ENCODE measurements at regions of chr5 and their contacts with region 1.

Region 1: DNA sequence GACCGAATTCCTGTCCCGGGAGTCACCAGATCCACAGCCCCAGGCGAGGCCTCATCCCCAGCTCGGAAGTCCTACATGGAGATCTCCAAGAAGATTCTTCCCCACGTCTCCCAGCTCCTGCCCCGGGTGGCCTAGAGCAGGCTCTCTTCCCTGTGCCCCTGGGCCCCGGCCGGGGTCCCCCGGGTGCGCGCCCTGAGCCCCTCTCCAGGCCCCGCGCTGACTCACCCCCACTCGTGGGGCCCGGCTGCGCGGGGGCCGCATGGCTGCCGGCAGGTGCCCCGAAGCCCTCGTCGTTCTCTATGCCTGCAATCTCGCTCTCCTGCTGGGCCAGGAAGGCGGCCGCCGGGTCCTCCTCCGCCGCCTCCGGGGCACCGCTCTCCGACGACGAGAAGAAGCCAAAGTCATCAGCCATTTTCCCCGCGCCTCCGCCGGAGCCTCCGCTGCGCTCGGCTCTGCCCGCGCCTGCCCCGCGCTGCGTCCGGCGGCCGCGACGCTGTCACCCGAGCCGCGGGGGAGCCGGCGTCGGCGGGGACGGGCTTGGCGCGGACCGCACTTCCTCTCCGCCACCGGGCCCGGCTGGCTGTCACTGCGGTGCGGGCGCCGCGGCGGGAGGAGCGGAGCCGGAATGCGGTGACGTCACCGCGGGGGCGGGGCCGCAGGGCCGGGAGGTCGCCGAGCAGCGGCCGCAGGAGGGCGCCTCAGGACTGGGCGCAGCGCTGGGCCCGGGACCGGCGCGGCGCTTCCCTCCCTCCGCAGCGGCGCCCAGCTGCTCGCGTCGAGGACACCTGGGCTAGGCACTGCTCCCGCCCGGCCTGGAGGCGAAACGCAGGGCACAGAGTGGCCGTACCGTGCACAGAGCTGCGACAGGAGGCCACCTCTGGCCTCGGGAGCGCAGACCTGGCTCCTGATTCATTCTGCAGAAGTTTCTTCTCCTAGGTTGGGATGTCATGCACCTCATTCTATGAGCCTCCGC is at the start of gene CLTB:
- DNase-seq: peak; percentile 95
- ATAC-seq: peak; percentile 97
- H3K4me3 ChIP-seq: peak within 1 kb of the TSS; percentile 51 to 86 (median 70)
- H3K4me3 Mint-ChIP-seq: peak within 1 kb of the TSS; percentile 83
- H3K27ac ChIP-seq: peak within 1 kb of the TSS in 1 of 2 donors; percentile 58
- H3K27ac Mint-ChIP-seq: peak within 1 kb of the TSS; percentile 77
- H3K4me1 ChIP-seq: peaks cover 14 to 19% of the 10 kb centered on the region in 2 donors
- H3K4me1 Mint-ChIP-seq: peaks cover 21% of the 10 kb centered on the region
- H3K27me3 ChIP-seq: no peaks in the 10 kb centered on the region
- H3K27me3 Mint-ChIP-seq: peaks cover 2% of the 10 kb centered on the region
- CTCF ChIP-seq: peak; percentile 74
- total RNA-seq, gene CLTB: 29.6 and 29.9 TPM in 2 replicates

Region 2: GRCh38 chr5:175765858-175766257 is 650.4 kb before region 1 on chr5:
- CTCF ChIA-PET with region 1: no interaction called
- POLR2A ChIA-PET with region 1: no interaction called
- intact Hi-C with region 1: no loop called
- DNase-seq: no peak
- ATAC-seq: no peak
- H3K4me3 ChIP-seq: no peak overlapping the region
- H3K4me3 Mint-ChIP-seq: no peak overlapping the region
- H3K27ac ChIP-seq: no peak overlapping the region
- H3K27ac Mint-ChIP-seq: no peak overlapping the region
- H3K4me1 ChIP-seq: no peaks in the 10 kb centered on the region
- H3K4me1 Mint-ChIP-seq: no peaks in the 10 kb centered on the region
- H3K27me3 ChIP-seq: peaks cover 0 to 4% (median 2%) of the 10 kb centered on the region in 4 experiments
- H3K27me3 Mint-ChIP-seq: peaks cover 43% of the 10 kb centered on the region
- CTCF ChIP-seq: no peak

Region 3: DNA sequence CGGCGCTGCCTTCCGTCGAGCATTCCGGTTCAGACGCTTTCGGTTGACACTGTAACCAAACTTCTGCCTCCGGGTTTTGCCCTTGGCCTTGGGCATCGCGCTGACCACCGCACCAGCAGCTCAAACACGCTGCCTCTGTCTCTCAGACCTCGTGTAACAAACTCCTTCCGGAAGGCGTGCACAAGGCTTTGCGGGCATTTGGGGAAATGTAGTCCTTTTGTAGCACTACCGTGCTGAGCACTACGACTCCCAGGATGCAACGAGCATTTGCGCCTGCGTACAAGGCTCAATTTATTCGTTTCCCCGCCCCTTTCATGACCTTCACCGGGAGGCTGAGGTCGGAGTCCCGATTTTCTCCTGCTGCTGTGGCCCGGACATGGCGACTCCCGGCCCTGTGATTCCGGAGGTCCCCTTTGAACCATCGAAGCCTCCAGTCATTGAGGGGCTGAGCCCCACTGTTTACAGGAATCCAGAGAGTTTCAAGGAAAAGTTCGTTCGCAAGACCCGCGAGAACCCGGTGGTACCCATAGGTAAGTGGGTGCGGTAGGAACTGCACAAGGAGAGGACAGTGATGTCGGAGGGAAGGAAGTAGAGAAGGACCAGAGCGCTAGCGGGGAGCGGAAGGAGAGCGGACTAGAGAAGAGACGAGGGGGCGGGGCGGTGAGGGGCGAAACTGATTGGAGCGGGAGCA is 27.6 kb before region 1 on chr5 and contains the starts of genes HIGD2A and NOP16:
- CTCF ChIA-PET with region 1: no interaction called
- POLR2A ChIA-PET with region 1: interaction called, 7 read pairs
- intact Hi-C with region 1: loop called (anchors 1 kb)
- DNase-seq: peak; percentile 99
- ATAC-seq: peak; percentile 86
- H3K4me3 ChIP-seq: peak within 1 kb of the TSS; percentile 69 to 98 (median 93)
- H3K4me3 Mint-ChIP-seq: peak within 1 kb of the TSS; percentile 100
- H3K27ac ChIP-seq: peak within 1 kb of the TSS; percentile 90 to 93
- H3K27ac Mint-ChIP-seq: peak within 1 kb of the TSS; percentile 100
- H3K4me1 ChIP-seq: peaks cover 19 to 29% of the 10 kb centered on the region in 2 donors
- H3K4me1 Mint-ChIP-seq: peaks cover 26% of the 10 kb centered on the region
- H3K27me3 ChIP-seq: no peaks in the 10 kb centered on the region
- H3K27me3 Mint-ChIP-seq: no peaks in the 10 kb centered on the region
- CTCF ChIP-seq: no peak
- total RNA-seq, gene HIGD2A: 70.1 and 80.1 TPM in 2 replicates
- total RNA-seq, gene NOP16: 25.0 and 25.1 TPM in 2 replicates

Region 4: GRCh38 chr5:176537608-176538504 is 121.6 kb after region 1 on chr5:
- CTCF ChIA-PET with region 1: interaction called, 33 read pairs
- POLR2A ChIA-PET with region 1: interaction called, 6 read pairs
- intact Hi-C with region 1: loop called (anchors 1 kb)
- DNase-seq: peak; percentile 99
- ATAC-seq: peak; percentile 70
- H3K4me3 ChIP-seq: peak overlapping the region; percentile 84 to 100 (median 94)
- H3K4me3 Mint-ChIP-seq: peak overlapping the region; percentile 99
- H3K27ac ChIP-seq: peak overlapping the region; percentile 93 to 99
- H3K27ac Mint-ChIP-seq: peak overlapping the region; percentile 100
- H3K4me1 ChIP-seq: peaks cover 50 to 59% of the 10 kb centered on the region in 2 donors
- H3K4me1 Mint-ChIP-seq: peaks cover 70% of the 10 kb centered on the region
- H3K27me3 ChIP-seq: no peaks in the 10 kb centered on the region
- H3K27me3 Mint-ChIP-seq: no peaks in the 10 kb centered on the region
- CTCF ChIP-seq: no peak

Region 5: DNA sequence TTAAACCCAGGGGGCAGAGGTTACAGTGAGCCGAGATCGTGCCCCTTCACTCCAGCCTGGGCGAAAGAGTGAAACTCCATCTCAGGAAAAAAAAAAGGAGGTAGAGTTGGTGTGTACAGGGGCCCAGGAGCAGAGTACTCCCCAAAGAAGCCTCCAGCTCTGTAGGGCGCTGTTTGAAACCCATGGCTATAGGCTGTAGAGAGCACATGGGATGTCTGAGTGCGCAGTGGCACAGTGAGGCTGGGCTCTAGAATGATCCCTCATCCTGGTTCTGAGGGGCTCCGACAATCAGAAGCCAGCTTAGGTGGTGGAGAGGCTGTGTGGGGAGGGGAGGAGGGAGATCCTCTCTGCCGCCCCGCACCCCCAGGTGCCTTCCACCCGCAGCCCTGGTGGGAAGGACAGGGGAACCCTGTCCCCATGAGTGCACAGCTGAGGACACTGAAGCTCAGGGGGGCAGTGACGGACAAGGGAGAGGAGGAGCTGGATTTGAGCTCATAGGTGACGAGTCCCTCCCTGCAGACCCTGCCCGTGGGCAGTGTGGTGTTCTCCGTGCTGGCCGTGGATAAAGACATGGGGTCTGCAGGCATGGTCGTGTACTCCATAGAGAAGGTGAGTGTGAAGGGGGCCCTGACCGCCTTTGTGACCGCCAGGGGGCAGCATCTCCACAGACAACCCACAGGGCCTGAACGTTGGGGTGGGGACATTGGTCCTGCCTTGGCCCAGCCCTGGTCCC is 157.5 kb after region 1 on chr5:
- CTCF ChIA-PET with region 1: interaction called, 24 read pairs
- POLR2A ChIA-PET with region 1: no interaction called
- intact Hi-C with region 1: loop called (anchors 1 kb)
- DNase-seq: peak; percentile 82
- ATAC-seq: peak; percentile 79
- H3K4me3 ChIP-seq: no peak overlapping the region
- H3K4me3 Mint-ChIP-seq: no peak overlapping the region
- H3K27ac ChIP-seq: no peak overlapping the region
- H3K27ac Mint-ChIP-seq: no peak overlapping the region
- H3K4me1 ChIP-seq: peaks cover 0 to 11% of the 10 kb centered on the region in 2 donors
- H3K4me1 Mint-ChIP-seq: peaks cover 5% of the 10 kb centered on the region
- H3K27me3 ChIP-seq: peaks cover 0 to 7% (median 2%) of the 10 kb centered on the region in 4 experiments
- H3K27me3 Mint-ChIP-seq: peaks cover 12% of the 10 kb centered on the region
- CTCF ChIP-seq: peak; percentile 92

Region 6: GRCh38 chr5:176609724-176610434 is 193.6 kb after region 1 on chr5 and contains the start of gene GPRIN1:
- CTCF ChIA-PET with region 1: interaction called, 3 read pairs
- POLR2A ChIA-PET with region 1: no interaction called
- intact Hi-C with region 1: loop called (anchors 1 kb)
- DNase-seq: peak; percentile 82
- ATAC-seq: peak; percentile 78
- H3K4me3 ChIP-seq: peak within 1 kb of the TSS; percentile 21 to 78 (median 65)
- H3K4me3 Mint-ChIP-seq: peak within 1 kb of the TSS; percentile 98
- H3K27ac ChIP-seq: no peak within 1 kb of the TSS
- H3K27ac Mint-ChIP-seq: peak within 1 kb of the TSS; percentile 91
- H3K4me1 ChIP-seq: peaks cover 4 to 9% of the 10 kb centered on the region in 2 donors
- H3K4me1 Mint-ChIP-seq: peaks cover 12% of the 10 kb centered on the region
- H3K27me3 ChIP-seq: peaks cover 0 to 22% (median 8%) of the 10 kb centered on the region in 4 experiments
- H3K27me3 Mint-ChIP-seq: peaks cover 24% of the 10 kb centered on the region
- CTCF ChIP-seq: peak; percentile 17
- total RNA-seq, gene GPRIN1: 2.1 and 2.7 TPM in 2 replicates

Region 7: DNA sequence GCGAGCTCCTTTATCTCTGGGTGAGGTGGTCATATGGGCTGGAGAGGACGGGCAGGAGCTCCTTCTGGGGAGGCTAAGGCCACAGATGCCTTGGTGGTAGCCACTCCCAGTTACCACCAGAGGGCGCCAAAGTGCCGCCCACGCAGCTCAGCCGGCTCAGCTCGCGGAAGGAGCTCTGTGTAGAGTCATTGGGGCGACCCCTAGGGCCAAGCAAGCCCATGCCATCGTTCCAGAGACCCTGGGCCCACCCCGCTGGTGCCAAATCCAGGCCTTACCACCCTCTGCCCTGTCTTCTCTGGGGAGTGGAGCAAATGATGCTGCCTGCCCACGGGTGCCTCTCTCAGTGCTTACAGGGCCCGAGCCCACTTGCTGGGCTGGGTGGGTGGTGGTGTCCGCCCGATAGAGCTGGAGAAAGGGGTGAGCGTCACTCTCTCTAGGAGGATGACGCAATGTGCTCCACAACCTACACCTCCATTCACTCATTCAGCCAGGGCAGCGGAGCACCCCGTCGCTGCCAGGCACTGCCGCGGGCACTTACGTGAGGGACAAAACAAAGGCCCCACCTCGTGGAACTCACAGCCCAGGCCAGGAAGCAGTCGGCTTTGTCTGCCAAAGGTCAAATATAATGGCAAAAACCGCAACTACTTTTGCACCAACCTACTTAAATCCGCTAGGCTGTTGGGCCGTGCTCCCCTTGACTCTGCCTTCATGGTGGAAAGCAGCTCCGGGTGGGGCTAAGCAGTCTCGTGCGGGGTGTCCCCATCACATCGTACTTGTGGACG is 244.8 kb after region 1 on chr5:
- CTCF ChIA-PET with region 1: interaction called, 16 read pairs
- POLR2A ChIA-PET with region 1: no interaction called
- intact Hi-C with region 1: no loop called
- DNase-seq: peak; percentile 89
- ATAC-seq: peak; percentile 76
- H3K4me3 ChIP-seq: no peak overlapping the region
- H3K4me3 Mint-ChIP-seq: no peak overlapping the region
- H3K27ac ChIP-seq: no peak overlapping the region
- H3K27ac Mint-ChIP-seq: peak overlapping the region; percentile 67
- H3K4me1 ChIP-seq: peaks cover 25 to 30% of the 10 kb centered on the region in 2 donors
- H3K4me1 Mint-ChIP-seq: peaks cover 32% of the 10 kb centered on the region
- H3K27me3 ChIP-seq: peaks cover 0 to 16% (median 2%) of the 10 kb centered on the region in 4 experiments
- H3K27me3 Mint-ChIP-seq: peaks cover 23% of the 10 kb centered on the region
- CTCF ChIP-seq: peak; percentile 96

Measured in B cell (primary cell).